Mammary epithelial cell (primary cell): ENCODE measurements at regions of chr7 and their contacts with region 1.

Region 1: GRCh38 chr7:41107668-41108448 is 595.0 kb downstream of the INHBA start:
- DNase-seq: peak; percentile 99
- H3K4me3 ChIP-seq: peak overlapping the region in 1 of 3 experiments; percentile 10
- H3K27ac ChIP-seq: peak overlapping the region; percentile 100
- H3K4me1 ChIP-seq: peaks cover 47% of the 10 kb centered on the region
- H3K27me3 ChIP-seq: no peaks in the 10 kb centered on the region
- CTCF ChIP-seq: no peak

Region 2: GRCh38 chr7:40700643-40701421 is 407.0 kb before region 1 on chr7:
- CTCF ChIA-PET with region 1: no interaction called
- dilution Hi-C with region 1: no loop called
- in situ Hi-C with region 1: no loop called
- intact Hi-C with region 1: loop called (anchors 10 kb)
- DNase-seq: peak; percentile 54
- H3K4me3 ChIP-seq: no peak overlapping the region
- H3K27ac ChIP-seq: peak overlapping the region; percentile 18
- H3K4me1 ChIP-seq: peaks cover 38% of the 10 kb centered on the region
- H3K27me3 ChIP-seq: no peaks in the 10 kb centered on the region
- CTCF ChIP-seq: peak; percentile 15 to 28

Region 3: DNA sequence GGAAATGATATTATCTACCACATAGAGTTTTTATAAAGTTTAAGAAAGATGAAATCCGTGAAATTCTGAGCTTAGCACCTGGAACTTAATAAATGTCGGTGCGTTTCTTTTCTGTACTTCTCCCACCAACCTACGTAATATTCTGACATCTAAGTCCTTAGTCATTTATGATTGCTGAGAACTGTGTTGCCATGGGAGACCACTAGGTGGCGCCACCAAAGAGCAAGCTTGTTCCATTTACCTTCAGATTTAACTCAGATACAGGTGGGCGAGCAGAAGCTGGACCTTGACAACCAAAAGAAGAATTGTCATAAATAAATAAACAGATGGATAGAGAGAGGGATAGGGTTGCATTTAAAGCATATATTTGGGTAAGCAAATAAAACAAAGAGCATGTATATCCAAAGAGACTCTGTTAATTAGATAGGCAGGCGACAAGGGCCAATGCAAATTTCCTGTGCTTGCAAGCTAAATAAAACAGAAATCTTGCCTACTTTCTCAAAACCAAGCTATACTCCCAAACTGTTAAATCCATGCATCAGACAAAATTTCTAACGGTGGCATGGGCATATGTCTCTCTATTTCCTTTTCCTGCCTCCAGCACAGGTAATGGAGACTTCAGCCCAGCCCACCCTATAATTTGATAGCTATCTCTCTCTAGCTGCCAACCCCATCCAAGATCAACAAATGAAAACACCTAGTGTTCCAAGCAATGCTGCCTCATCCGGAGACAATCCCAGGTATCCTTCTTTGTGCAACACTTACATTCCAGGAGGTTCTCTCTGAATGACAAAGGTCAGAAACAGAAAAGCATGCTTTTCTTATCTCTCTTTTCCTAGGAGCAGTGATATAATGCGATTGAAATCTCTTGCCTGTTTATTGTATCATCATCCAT is 104.6 kb before region 1 on chr7:
- CTCF ChIA-PET with region 1: no interaction called
- dilution Hi-C with region 1: no loop called
- in situ Hi-C with region 1: no loop called
- intact Hi-C with region 1: loop called (anchors 2 kb)
- DNase-seq: peak; percentile 49
- H3K4me3 ChIP-seq: no peak overlapping the region
- H3K27ac ChIP-seq: peak overlapping the region; percentile 91
- H3K4me1 ChIP-seq: peaks cover 50% of the 10 kb centered on the region
- H3K27me3 ChIP-seq: no peaks in the 10 kb centered on the region
- CTCF ChIP-seq: peak; percentile 71 to 83

Region 4: DNA sequence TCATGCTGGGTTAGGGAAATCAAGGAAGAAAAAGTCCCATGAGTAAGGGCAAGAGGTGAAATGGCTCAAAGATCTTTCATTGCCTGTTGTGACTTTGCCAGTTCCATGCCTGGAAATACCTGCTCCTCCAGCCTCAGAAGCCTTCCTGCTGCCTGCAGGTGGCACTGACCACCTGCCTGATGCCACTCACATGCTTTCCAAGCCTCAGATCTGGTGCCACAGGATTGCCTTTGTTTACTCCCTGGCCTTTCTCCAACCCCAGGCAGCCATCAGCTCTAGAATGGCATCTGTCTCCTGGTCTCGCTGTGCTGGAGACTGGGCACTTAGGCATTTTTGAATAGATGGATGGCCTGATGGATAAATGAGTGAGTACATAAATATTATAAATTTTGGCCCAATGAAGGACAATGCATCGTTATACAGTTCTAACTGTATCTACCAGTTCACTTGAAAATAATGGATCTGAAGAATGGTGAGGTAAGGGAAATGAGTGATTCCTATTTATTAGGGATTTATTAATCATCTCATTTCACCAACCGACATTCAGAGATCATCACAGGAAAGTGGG is 62.2 kb before region 1 on chr7:
- CTCF ChIA-PET with region 1: no interaction called
- dilution Hi-C with region 1: no loop called
- in situ Hi-C with region 1: no loop called
- intact Hi-C with region 1: loop called (anchors 5 kb)
- DNase-seq: peak; percentile 70
- H3K4me3 ChIP-seq: no peak overlapping the region
- H3K27ac ChIP-seq: no peak overlapping the region
- H3K4me1 ChIP-seq: peaks cover 16% of the 10 kb centered on the region
- H3K27me3 ChIP-seq: no peaks in the 10 kb centered on the region
- CTCF ChIP-seq: peak; percentile 71 to 88

Region 5: DNA sequence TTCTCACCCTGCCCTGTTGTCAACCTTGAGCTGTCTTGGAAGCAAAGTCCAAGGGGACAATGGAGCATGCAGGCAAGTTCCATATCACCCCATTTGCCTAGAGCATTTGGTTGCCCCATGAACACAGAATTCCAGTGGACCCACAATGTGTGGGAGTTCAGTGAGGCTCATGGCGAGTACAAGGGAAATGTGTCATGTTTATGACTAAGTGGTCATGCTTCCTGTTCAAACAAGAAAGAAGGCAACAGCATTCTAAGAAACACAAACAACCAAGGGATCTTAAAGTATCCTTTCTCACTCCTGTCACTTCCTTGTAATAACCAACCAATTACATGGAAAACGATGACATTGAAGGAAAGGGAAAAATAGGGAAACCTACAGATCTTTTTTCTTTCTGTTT is 82.0 kb after region 1 on chr7:
- CTCF ChIA-PET with region 1: no interaction called
- dilution Hi-C with region 1: no loop called
- in situ Hi-C with region 1: no loop called
- intact Hi-C with region 1: loop called (anchors 2 kb)
- DNase-seq: peak; percentile 97
- H3K4me3 ChIP-seq: no peak overlapping the region
- H3K27ac ChIP-seq: peak overlapping the region; percentile 99
- H3K4me1 ChIP-seq: peaks cover 38% of the 10 kb centered on the region
- H3K27me3 ChIP-seq: no peaks in the 10 kb centered on the region
- CTCF ChIP-seq: no peak

Region 6: DNA sequence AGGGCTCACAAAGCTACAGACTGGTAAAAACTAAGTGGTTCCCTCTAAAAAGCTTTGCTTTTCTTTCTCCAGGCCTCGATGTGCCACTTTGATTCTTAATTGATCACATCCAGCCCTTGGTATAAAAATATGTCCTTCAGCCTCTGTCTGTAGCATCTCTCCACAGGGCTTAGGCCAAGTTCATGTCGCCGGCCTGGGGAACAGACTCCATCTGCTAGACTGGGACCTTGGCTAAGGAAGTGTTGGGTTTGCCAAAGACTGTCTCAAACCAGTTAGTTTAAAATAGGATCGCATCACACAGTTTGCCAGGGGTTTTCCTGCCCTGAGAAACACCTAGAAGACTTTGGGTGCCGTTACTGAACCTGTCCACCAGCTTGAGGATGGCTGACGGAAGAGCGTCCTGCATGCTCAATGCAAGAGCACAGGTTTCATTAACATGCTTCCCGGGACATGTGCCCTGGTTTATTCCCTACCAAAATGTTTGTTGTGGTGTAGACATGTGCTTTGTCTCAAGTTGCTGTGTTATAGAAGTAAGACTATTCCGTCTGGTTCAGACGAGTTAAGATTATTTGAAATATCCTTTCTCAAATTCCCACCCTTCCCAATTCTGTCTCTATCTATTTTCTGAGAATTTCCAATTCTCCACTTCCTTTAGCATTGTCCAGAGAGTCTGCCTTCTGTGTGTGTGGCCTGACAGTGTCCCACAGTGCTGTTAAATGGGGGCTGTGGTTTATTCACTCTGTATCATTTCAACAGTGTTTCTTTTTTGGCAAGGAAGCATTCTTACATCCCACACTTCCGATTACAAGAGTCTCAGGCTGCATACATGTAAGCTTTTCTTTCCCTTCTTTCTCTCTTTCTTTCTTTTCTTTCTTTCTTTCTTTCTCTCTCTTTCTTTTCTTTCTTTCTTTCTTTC is 260.4 kb after region 1 on chr7:
- CTCF ChIA-PET with region 1: no interaction called
- dilution Hi-C with region 1: no loop called
- in situ Hi-C with region 1: no loop called
- intact Hi-C with region 1: loop called (anchors 10 kb)
- DNase-seq: no peak
- H3K4me3 ChIP-seq: no peak overlapping the region
- H3K27ac ChIP-seq: no peak overlapping the region
- H3K4me1 ChIP-seq: peaks cover 6% of the 10 kb centered on the region
- H3K27me3 ChIP-seq: no peaks in the 10 kb centered on the region
- CTCF ChIP-seq: no peak